CD14-positive monocyte (primary cell): ENCODE measurements at regions of chr7 and their contacts with region 1.

Region 1: DNA sequence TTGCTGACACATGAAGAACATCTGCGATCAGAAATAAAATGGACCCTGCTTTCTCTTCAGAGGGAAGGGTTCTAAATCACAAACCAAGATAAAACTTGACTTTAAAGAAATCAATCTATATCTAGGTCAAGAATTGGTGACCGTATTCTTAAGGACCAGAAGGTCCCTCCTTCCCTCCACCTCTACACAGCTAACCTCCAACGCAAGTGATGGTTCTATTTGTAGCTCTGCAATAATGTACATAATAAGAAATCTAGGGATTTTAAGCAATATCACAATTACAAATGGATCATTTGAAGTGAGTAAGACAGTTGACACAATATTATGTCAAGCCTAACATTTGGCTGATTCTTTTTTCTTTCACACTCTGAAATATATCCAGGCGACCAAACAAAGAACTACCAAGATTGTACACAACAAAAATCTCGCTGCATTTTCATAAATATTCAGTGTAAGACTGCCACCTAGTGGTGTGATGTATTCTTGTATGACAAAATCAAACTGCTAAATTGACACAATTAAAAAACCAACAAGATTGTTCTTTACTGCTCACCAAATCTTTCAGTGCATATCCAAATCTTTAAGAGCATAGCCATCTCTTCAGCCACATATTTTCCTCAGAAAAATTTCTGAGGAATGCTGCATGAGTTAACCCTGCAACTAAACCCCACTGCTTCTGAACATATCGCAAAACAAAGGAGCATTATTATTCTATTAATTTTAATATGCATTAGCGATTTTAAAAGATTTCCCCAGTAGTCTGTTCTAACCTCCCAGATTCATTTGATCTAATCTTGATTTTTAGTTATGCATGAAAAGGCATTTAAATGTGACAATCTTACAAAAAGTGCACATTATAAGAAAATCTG is 44.5 kb downstream of the ICA1 start:
- DNase-seq: peak; percentile 35 to 61 (median 45)
- H3K4me3 ChIP-seq: no peak overlapping the region
- H3K4me3 Mint-ChIP-seq: no peak overlapping the region
- H3K27ac ChIP-seq: no peak overlapping the region
- H3K27ac Mint-ChIP-seq: no peak overlapping the region
- H3K4me1 ChIP-seq: no peaks in the 10 kb centered on the region
- H3K4me1 Mint-ChIP-seq: peaks cover 2% of the 10 kb centered on the region
- H3K27me3 ChIP-seq: no peaks in the 10 kb centered on the region
- H3K27me3 Mint-ChIP-seq: peaks cover 0 to 2% (median 0%) of the 10 kb centered on the region in 3 donors
- CTCF ChIP-seq: peak; percentile 77

Region 2: DNA sequence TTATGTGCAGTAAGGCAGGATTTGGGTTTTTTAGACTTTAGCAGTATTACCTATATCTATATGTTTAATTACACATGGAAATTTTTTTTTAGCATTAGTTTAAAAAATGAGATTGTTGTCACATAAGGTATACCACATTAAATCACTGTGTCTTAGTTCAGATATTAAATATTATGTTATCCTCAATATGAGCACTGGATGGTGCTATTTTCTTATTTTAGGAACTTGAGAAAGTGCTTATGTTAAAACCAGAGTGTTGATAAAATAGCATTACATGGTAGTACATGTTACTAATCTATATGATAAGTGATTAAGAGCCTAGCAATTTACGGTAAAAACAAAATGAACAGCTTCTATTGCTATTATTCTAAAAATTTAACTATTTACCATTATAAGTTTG is 622.0 kb before region 1 on chr7:
- intact Hi-C with region 1: loop called (anchors 5 to 10 kb)
- DNase-seq: peak in 1 of 3 donors; percentile 39
- H3K4me3 ChIP-seq: no peak overlapping the region
- H3K4me3 Mint-ChIP-seq: no peak overlapping the region
- H3K27ac ChIP-seq: no peak overlapping the region
- H3K27ac Mint-ChIP-seq: no peak overlapping the region
- H3K4me1 ChIP-seq: no peaks in the 10 kb centered on the region
- H3K4me1 Mint-ChIP-seq: peaks cover 2% of the 10 kb centered on the region
- H3K27me3 ChIP-seq: no peaks in the 10 kb centered on the region
- H3K27me3 Mint-ChIP-seq: no peaks in the 10 kb centered on the region
- CTCF ChIP-seq: peak; percentile 58

Region 3: GRCh38 chr7:8176370-8177081 is 40.9 kb before region 1 on chr7:
- intact Hi-C with region 1: no loop called
- DNase-seq: peak; percentile 29 to 44 (median 31)
- H3K4me3 ChIP-seq: peak overlapping the region in 1 of 3 experiments; percentile 42
- H3K4me3 Mint-ChIP-seq: peak overlapping the region; percentile 13 to 77
- H3K27ac ChIP-seq: peak overlapping the region; percentile 0 to 63
- H3K27ac Mint-ChIP-seq: peak overlapping the region; percentile 67 to 87 (median 85)
- H3K4me1 ChIP-seq: peaks cover 54 to 67% of the 10 kb centered on the region in 2 donors
- H3K4me1 Mint-ChIP-seq: peaks cover 67% of the 10 kb centered on the region
- H3K27me3 ChIP-seq: no peaks in the 10 kb centered on the region
- H3K27me3 Mint-ChIP-seq: no peaks in the 10 kb centered on the region
- CTCF ChIP-seq: no peak